ENCODE measurements at regions of chr15 and their contacts with region 1.

Region 1: GRCh38 chr15:27705056-27705455 is 394.1 kb downstream of the OCA2 start:
- DNase-seq: no peak
- ATAC-seq: no peak

Region 2: GRCh38 chr15:27648359-27648758 is 56.7 kb before region 1 on chr15:
- intact Hi-C with region 1: no loop called
- DNase-seq: no peak
- ATAC-seq: no peak

Region 3: DNA sequence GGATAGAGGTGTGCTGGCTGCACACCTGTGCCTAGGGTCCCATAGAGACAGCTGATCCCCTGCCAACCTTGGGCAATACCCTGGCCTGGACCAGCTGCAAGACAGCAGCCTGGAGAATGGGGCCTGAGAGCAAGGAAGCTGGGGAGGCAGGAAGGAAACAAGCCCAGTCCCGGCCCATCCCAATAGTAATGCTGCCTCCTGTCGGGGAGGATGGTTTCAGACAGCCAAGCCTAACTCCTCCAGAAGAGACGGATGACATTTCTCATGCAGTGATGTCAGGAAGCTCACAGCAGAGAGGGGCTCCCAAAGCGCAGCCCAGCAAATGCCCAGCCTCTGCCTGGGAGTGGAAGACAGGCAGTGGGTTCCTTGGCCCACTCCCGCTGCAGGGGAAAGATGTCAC is 14.8 kb before region 1 on chr15:
- intact Hi-C with region 1: loop called in 1 of 2 experiments (anchors 2 kb)
- DNase-seq: no peak
- ATAC-seq: no peak

Region 4: GRCh38 chr15:27906802-27907201 is 201.7 kb after region 1 on chr15:
- intact Hi-C with region 1: no loop called
- DNase-seq: no peak
- ATAC-seq: no peak